ENCODE measurements at regions of chr20 and their contacts with region 1.

Region 1: GRCh38 chr20:462199-462991 is at the start of gene TBC1D20:
- DNase-seq: peak; percentile 49 to 86
- H3K4me3 ChIP-seq: peak within 1 kb of the TSS; percentile 70 to 86 (median 82)
- H3K27ac ChIP-seq: peak within 1 kb of the TSS; percentile 41; the same call in 1 of the 2 replicates
- H3K4me1 ChIP-seq: peaks cover 0 to 4% (median 1%) of the 10 kb centered on the region in 4 experiments; a peak in 3 of 7 replicates
- H3K27me3 ChIP-seq: peaks cover 0 to 9% (median 7%) of the 10 kb centered on the region in 4 experiments; a peak in 3 of 7 replicates
- CTCF ChIP-seq: peak in 1 of 3 experiments; percentile 18; a peak in 1 of 4 replicates
- EP300 ChIP-seq: no peak; a peak in 1 of 3 replicates
- POLR2A ChIP-seq: peak; percentile 68 to 85; a peak in 2 of 3 replicates
- RAD21 ChIP-seq: no peak
- total RNA-seq, gene TBC1D20: 16.2 and 17.1 TPM in 2 replicates

Region 2: GRCh38 chr20:472889-473292 is 10.5 kb after region 1 on chr20:
- CTCF ChIA-PET with region 1: interaction called, 3 read pairs
- POLR2A ChIA-PET with region 1: interaction called, 26 read pairs
- DNase-seq: no peak
- H3K4me3 ChIP-seq: no peak overlapping the region
- H3K27ac ChIP-seq: no peak overlapping the region
- H3K4me1 ChIP-seq: no peaks in the 10 kb centered on the region
- H3K27me3 ChIP-seq: no peaks in the 10 kb centered on the region
- CTCF ChIP-seq: no peak
- EP300 ChIP-seq: no peak
- POLR2A ChIP-seq: no peak; a peak in 1 of 3 replicates
- RAD21 ChIP-seq: no peak

Region 3: DNA sequence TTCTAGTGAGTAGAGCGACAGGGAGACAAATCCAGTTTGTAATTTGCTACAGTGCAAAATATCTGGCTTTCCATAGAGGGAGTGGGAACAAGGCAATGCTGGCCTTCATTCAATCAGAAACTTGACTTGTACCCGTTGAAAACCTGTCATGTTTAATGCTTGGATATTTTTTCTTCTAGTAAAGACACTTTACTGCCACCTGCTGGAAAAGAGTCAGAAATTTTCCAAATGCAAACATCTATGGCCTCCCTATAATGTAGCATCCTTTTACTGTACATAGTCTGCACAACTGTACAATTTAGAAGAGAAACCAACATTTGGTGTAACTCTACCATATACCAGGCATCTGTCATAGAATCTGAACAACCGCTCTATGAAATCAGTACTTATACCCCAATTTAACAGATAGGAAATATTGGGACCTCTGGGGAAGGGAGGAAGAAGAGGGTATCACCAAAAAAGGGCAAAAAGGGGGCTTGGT is 16.6 kb after region 1 on chr20:
- CTCF ChIA-PET with region 1: interaction called, 3 read pairs
- POLR2A ChIA-PET with region 1: interaction called, 26 read pairs
- DNase-seq: no peak
- H3K4me3 ChIP-seq: no peak overlapping the region
- H3K27ac ChIP-seq: no peak overlapping the region
- H3K4me1 ChIP-seq: no peaks in the 10 kb centered on the region
- H3K27me3 ChIP-seq: no peaks in the 10 kb centered on the region
- CTCF ChIP-seq: peak in 2 of 3 experiments; percentile 43 to 51; a peak in 2 of 4 replicates
- EP300 ChIP-seq: no peak
- POLR2A ChIP-seq: no peak
- RAD21 ChIP-seq: peak; percentile 50 to 60

Measured in H1 (cell line).